ENCODE measurements at regions of chr1 and their contacts with region 1.

Region 1: GRCh38 chr1:100860397-100860991 is 34.1 kb downstream of the EXTL2 start:
- DNase-seq: no peak
- H3K4me3 ChIP-seq: no peak overlapping the region
- H3K27ac ChIP-seq: no peak overlapping the region
- H3K4me1 ChIP-seq: no peaks in the 10 kb centered on the region
- H3K27me3 ChIP-seq: no peaks in the 10 kb centered on the region
- CTCF ChIP-seq: no peak
- EP300 ChIP-seq: no peak
- POLR2A ChIP-seq: no peak

Region 2: DNA sequence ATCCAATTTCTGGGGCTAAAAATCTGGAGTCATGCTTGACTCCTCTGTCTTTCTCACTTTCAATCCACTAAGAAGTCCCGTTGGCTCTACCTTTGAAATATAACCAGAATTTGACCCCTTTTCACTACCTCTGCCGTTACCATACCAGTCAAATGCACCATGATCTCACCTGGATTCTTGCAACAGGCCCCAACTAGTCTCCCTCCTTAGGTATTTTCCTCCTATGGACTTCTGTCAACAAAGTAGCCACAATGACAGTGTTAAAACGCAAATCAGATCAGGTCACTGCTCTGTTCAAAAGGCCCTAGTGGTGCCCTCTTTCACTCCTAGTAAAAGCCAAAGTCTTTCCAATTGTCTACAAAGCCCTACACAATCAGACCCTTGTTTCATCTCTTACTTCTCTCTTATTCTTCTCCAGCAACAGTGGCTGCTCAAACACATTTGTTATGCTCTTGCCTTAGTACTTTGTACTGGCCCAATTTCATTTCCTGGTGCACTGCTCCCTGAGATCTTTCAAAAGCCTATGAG is 1046.1 kb before region 1 on chr1:
- in situ Hi-C with region 1: loop called (anchors 5 to 25 kb)
- intact Hi-C with region 1: no loop called
- DNase-seq: no peak
- H3K4me3 ChIP-seq: no peak overlapping the region
- H3K27ac ChIP-seq: no peak overlapping the region
- H3K4me1 ChIP-seq: no peaks in the 10 kb centered on the region
- H3K27me3 ChIP-seq: no peaks in the 10 kb centered on the region
- CTCF ChIP-seq: no peak
- EP300 ChIP-seq: no peak
- POLR2A ChIP-seq: no peak